ENCODE measurements at regions of chrX and their contacts with region 1.

Region 1: GRCh38 chrX:71068049-71068763 is at the start of gene SNX12:
- DNase-seq: peak; percentile 87
- H3K4me3 ChIP-seq: peak within 1 kb of the TSS; percentile 62 to 74 (median 67)
- H3K27ac ChIP-seq: peak within 1 kb of the TSS; percentile 67
- H3K4me1 ChIP-seq: peaks cover 8% of the 10 kb centered on the region
- H3K27me3 ChIP-seq: no peaks in the 10 kb centered on the region
- CTCF ChIP-seq: no peak
- total RNA-seq, gene SNX12: 83.0 to 88.1 TPM

Region 2: DNA sequence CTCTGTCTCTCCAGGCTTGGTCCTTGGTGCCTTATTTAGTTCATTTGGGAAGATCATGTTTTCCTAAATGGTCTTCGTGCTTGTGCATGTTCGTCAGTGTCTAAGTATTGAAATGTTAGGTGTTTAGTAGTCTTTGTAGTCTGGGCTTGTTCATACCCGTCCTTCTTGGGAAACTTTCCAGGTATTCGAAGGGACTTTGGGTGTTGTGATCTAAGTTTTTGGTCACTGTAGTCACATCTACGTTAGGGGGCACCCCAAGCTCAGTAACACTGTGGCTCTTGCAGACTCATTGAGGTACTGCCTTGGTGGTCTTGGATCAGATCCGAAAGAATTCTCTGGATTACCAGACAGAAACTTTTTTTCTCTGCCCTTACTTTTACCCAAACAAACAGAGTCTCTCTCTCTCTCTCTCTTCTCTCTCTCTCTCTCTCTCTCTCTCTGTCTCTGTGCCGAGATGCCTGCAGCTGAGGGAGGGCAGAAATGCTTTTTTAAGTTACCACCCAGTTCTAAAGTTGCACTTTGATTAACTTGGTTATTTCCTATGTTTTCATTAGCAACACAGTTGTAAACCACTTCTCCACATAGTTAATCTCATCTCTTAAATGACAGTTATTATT is 69.7 kb before region 1 on chrX:
- CTCF ChIA-PET with region 1: no interaction called
- dilution Hi-C with region 1: no loop called
- in situ Hi-C with region 1: no loop called
- intact Hi-C with region 1: no loop called
- DNase-seq: peak; percentile 84
- H3K4me3 ChIP-seq: no peak overlapping the region
- H3K27ac ChIP-seq: no peak overlapping the region
- H3K4me1 ChIP-seq: no peaks in the 10 kb centered on the region
- H3K27me3 ChIP-seq: no peaks in the 10 kb centered on the region
- CTCF ChIP-seq: peak; percentile 21 to 48

Region 3: DNA sequence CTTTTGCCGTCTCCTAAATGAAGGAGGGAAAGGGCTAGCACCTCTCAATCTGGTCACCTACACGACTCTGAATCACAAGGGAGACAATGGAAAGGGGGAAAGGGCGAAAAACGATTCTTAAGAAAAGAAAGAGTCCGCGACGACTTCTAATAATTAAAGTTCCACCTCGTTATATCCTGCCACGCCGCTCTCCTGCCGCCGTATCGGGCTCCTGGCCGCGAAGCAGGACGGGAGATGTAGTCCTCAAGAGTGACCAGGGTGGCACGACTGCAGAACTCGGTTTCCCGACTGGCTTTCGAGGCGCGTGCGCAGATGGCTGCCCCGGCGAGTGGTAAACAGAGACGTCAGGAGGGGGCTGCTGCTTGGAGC is 27.3 kb after region 1 on chrX and contains the start of gene FOXO4:
- CTCF ChIA-PET with region 1: no interaction called
- dilution Hi-C with region 1: no loop called
- in situ Hi-C with region 1: no loop called
- intact Hi-C with region 1: loop called (anchors 1 kb)
- DNase-seq: peak; percentile 69
- H3K4me3 ChIP-seq: peak within 1 kb of the TSS; percentile 40 to 59 (median 57)
- H3K27ac ChIP-seq: no peak within 1 kb of the TSS
- H3K4me1 ChIP-seq: peaks cover 5% of the 10 kb centered on the region
- H3K27me3 ChIP-seq: no peaks in the 10 kb centered on the region
- CTCF ChIP-seq: no peak
- total RNA-seq, gene FOXO4: 5.9 to 13.8 TPM

Region 4: DNA sequence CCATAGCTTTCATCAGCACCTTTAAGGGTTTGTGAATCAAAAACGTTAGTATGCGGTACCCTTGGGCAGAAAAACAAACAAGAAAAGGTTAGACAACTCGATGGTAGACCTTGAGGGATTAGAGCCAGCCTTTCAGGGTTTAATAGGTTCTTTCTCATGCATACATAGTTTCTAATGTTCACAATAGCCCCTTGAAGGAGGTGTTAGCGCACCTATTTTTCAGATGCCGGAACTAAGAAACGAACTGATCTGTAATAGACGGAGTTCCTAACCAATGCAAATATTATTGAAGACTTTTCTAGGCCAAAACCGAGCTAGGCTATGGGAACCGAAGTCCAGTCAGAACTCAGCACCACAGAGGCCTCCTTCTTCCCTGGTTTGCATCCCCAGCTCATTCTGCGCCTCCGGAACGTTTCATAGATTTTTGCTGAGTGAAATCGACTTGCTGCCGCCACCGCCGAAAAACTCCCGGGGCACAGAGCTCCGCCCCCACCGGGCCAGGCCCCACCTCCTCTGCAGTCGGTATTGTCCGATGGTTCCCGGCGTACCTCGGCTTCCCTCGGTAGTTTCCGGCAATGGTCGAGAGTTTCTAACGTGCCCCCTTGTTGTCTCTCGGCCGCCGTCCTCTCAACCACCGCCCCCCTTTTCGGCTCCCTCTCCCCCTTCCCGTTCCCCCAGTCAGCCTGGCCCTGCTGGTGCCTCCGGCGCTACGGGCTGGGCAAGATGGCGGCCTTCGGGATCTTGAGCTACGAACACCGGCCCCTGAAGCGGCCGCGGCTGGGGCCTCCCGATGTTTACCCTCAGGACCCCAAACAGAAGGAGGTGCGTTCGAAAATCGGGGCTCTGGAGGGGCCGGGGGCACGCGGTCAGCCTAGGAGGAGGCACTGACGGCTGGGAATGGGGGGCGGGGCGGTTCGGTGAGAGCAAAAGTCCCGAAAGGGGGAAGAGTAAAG is 50.1 kb after region 1 on chrX and contains the start of gene MED12:
- CTCF ChIA-PET with region 1: interaction called, 12 read pairs
- dilution Hi-C with region 1: no loop called
- in situ Hi-C with region 1: no loop called
- intact Hi-C with region 1: loop called (anchors 5 kb)
- DNase-seq: peak; percentile 64
- H3K4me3 ChIP-seq: peak within 1 kb of the TSS; percentile 61 to 69 (median 64)
- H3K27ac ChIP-seq: peak within 1 kb of the TSS; percentile 34
- H3K4me1 ChIP-seq: peaks cover 8% of the 10 kb centered on the region
- H3K27me3 ChIP-seq: no peaks in the 10 kb centered on the region
- CTCF ChIP-seq: no peak
- total RNA-seq, gene MED12: 22.0 to 26.7 TPM

Measured in mammary epithelial cell (primary cell).